Astrocyte of the cerebellum (primary cell): ENCODE measurements at regions of chr3 and their contacts with region 1.

Region 1: DNA sequence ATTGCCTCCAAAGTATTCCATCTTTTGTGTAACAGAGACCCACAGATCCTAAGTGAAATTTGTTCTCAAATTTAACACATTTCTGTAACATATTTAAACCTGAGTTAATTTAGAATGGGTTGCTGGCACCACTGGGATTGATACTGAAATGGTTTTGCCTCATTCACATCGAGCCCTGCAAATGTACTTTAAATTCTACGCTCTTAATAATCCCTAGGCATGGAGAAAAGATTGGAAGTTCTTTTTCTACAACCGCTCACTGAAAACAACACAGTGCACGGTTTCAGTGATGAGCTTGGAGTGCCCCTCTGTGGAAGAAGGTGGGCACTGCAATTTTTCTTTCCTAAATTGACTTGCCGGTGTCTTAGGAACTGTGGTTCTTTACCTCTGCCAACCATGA is 109.9 kb upstream of the ATP11B start:
- DNase-seq: peak; percentile 64
- H3K4me3 ChIP-seq: no peak overlapping the region
- CTCF ChIP-seq: peak; percentile 88

Region 2: GRCh38 chr3:181694805-181695660 is 988.4 kb before region 1 on chr3:
- in situ Hi-C with region 1: loop called (anchors 5 kb)
- DNase-seq: no peak
- H3K4me3 ChIP-seq: peak overlapping the region; percentile 44
- CTCF ChIP-seq: peak; percentile 36

Region 3: DNA sequence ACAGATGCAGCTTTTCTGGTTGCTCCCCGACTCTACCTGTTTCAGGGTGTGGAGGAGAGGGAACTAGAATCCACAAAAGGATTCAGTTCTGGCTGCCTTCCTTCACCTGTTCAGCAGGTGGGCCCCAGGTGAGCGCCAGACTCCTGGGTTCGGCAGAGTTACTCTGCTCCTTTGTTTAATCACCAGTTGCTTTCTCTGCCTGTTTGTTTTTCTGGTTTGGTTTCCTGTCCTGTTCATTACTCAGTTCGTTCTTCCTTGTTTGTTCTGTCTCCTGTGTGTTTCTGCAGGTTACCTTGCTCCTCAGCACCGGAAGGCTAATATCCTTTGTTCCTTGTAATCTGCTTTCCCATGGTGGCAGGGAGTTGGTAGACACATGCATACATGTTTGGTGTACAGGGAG is 398.7 kb before region 1 on chr3:
- in situ Hi-C with region 1: loop called (anchors 5 kb)
- DNase-seq: no peak
- H3K4me3 ChIP-seq: no peak overlapping the region
- CTCF ChIP-seq: no peak

Region 4: GRCh38 chr3:182618085-182618732 is 65.2 kb before region 1 on chr3:
- in situ Hi-C with region 1: loop called (anchors 5 kb)
- DNase-seq: peak; percentile 23
- H3K4me3 ChIP-seq: no peak overlapping the region
- CTCF ChIP-seq: peak; percentile 73